Dorsolateral prefrontal cortex (tissue), 120 donors: ENCODE measurements at regions of chr5 and their contacts with region 1.

Region 1: DNA sequence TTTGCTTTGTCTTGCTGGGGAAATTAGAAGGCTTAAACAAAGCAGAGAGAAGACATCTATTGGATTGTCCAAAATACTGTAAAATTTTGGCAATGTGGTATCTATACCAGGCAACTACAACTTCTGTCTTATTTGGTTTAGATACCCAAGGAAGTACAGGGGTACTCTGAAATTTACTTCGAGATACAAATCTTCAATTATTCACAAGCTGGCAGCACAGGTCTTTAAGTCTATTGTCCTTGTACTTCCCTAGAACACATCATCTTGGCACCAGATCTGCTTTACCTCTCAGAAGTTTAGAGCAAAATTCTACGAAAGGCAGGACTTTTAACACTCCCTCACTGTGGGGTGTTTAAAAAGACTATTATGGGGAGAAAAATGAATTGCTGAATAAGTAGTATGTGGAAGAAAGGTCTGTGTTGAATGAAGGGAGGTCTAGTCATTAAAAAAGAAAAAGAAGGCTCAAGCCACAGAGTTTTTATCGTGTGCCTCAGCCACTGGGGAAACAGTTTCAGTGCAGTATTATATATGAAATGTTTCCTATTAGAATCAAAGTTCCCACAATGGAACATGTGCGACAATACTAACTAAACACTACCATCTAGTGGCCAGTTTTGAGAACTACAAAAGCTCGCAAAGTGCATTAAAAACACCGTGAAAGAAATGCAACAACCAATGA is 93.7 kb downstream of the PDE4D start:
- DNase-seq: no peak
- H3K4me3 ChIP-seq: no peak overlapping the region
- H3K27ac ChIP-seq: no peak overlapping the region
- H3K27me3 ChIP-seq: no peaks in the 10 kb centered on the region
- CTCF ChIP-seq: peak; percentile 66 to 96 (median 88)

Region 2: DNA sequence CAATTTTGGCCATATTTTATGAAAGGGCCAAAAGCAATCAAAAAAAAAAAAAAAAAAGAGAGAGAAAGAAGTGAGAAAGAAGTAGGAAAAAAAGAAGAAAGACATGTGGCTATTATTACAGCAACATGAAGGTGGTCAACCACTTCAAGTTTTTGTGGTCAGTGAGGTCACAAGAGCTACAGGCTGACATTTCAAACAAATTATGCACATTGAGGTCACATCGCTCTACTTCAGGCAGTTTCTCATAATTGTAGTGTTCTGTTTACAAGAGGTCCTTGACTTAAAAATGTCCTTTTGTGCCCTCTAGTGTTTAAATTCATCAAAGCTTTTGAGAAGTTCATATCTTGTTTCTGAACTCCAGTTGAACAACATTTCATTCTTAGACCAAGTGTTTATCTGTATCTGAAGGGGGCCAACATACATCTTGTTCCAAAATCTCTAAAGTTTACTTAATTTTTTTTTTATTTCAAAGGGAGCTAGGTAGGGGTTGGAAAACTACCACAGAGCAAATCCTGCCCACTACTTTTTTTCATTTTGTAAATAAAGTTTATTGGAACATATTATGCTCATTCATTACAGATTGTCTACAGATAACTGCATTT is 419.4 kb before region 1 on chr5:
- intact Hi-C with region 1: loop called (anchors 5 to 10 kb)
- DNase-seq: no peak
- H3K4me3 ChIP-seq: peak overlapping the region in 1 of 59 donors; percentile 27
- H3K27ac ChIP-seq: peak overlapping the region in 5 of 59 donors; percentile 0 to 68 (median 10)
- H3K27me3 ChIP-seq: no peaks in the 10 kb centered on the region
- CTCF ChIP-seq: peak in 55 of 56 donors; percentile 46 to 83 (median 72)

Region 3: GRCh38 chr5:59390074-59390659 is 409.6 kb before region 1 on chr5:
- intact Hi-C with region 1: loop called (anchors 5 to 10 kb)
- DNase-seq: peak in 1 of 10 donors; percentile 8
- H3K4me3 ChIP-seq: no peak overlapping the region
- H3K27ac ChIP-seq: no peak overlapping the region
- H3K27me3 ChIP-seq: no peaks in the 10 kb centered on the region
- CTCF ChIP-seq: peak; percentile 70 to 96 (median 85)

Region 4: GRCh38 chr5:59506285-59506877 is 293.4 kb before region 1 on chr5:
- intact Hi-C with region 1: loop called in 1 of 2 experiments (anchors 10 kb)
- DNase-seq: no peak
- H3K4me3 ChIP-seq: no peak overlapping the region
- H3K27ac ChIP-seq: no peak overlapping the region
- H3K27me3 ChIP-seq: no peaks in the 10 kb centered on the region
- CTCF ChIP-seq: peak; percentile 39 to 83 (median 63)

Region 5: DNA sequence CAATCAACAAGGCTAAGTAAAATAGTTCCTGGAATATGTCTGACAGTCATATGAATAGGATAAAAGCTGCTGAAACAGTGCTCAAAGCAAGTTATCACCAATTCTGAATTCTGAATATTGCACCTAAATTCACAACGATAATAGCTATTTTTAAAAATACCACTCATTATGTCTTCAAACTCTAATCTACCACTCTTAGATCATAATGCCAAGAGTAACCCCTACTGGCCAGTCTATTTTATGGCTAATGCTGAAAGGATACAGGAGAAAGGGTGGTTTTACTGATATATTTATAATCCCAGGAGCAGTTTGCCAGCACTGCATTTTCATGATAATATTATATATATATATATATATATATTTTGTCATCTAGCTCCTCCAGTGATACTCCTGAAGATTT is 139.1 kb before region 1 on chr5:
- intact Hi-C with region 1: loop called in 1 of 2 experiments (anchors 10 kb)
- DNase-seq: no peak
- H3K4me3 ChIP-seq: no peak overlapping the region
- H3K27ac ChIP-seq: no peak overlapping the region
- H3K27me3 ChIP-seq: no peaks in the 10 kb centered on the region
- CTCF ChIP-seq: peak in 55 of 56 donors; percentile 9 to 72 (median 48)

Region 6: DNA sequence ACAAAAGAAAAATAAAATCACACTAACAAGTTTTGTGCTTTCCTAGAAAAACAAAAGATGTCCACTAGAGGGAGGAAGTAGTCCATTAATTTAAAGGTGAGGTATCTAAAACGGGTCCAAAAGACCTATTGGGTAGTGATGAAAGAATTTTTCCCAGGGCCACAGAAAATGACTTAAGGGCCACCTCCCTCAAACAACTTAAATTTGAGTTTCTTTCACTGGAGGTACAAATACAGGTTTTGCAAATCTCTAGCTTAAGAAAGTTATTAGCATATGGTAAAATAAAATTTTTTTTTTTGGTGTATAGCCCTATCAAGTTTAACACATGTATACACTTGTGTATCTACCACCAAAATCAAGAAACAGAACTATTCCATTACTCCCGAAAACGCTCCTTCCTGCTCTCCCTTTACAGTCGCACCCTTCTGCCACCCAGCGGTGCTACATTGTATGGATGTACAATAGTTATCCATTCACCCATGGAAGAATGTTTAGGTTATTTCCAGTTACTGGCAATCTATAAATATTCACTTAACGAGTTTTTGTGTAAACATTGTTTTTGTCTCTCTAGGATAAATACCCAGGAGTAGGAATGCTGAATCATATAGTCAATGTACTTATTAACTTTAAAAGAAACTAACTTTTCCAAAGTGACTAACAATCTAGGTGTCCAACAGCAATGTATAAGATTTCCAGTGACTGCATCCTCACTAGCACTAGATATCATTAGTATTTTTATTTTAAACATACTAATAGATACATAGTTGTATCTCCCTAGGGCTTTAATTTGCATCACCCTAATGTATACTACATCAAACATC is 878.2 kb after region 1 on chr5:
- intact Hi-C with region 1: loop called in 1 of 2 experiments (anchors 10 kb)
- DNase-seq: peak in 1 of 10 donors; percentile 6
- H3K4me3 ChIP-seq: peak overlapping the region in 7 of 59 donors; percentile 2 to 43 (median 24)
- H3K27ac ChIP-seq: no peak overlapping the region
- H3K27me3 ChIP-seq: no peaks in the 10 kb centered on the region
- CTCF ChIP-seq: peak; percentile 47 to 85 (median 70)